ENCODE measurements at regions of chr9 and their contacts with region 1.

Region 1: GRCh38 chr9:13450723-13451122 is 171.2 kb upstream of the MPDZ start:
- DNase-seq: no peak
- ATAC-seq: no peak
- H3K4me3 ChIP-seq: no peak overlapping the region
- H3K4me3 Mint-ChIP-seq: no peak overlapping the region
- H3K27ac ChIP-seq: no peak overlapping the region
- H3K27ac Mint-ChIP-seq: no peak overlapping the region
- H3K4me1 ChIP-seq: no peaks in the 10 kb centered on the region
- H3K4me1 Mint-ChIP-seq: no peaks in the 10 kb centered on the region
- H3K27me3 ChIP-seq: no peaks in the 10 kb centered on the region
- H3K27me3 Mint-ChIP-seq: no peaks in the 10 kb centered on the region
- CTCF ChIP-seq: no peak

Region 2: GRCh38 chr9:13485068-13485596 is 34.4 kb after region 1 on chr9:
- CTCF ChIA-PET with region 1: no interaction called
- POLR2A ChIA-PET with region 1: no interaction called
- intact Hi-C with region 1: no loop called
- DNase-seq: no peak
- ATAC-seq: no peak
- H3K4me3 ChIP-seq: no peak overlapping the region
- H3K4me3 Mint-ChIP-seq: no peak overlapping the region
- H3K27ac ChIP-seq: no peak overlapping the region
- H3K27ac Mint-ChIP-seq: no peak overlapping the region
- H3K4me1 ChIP-seq: no peaks in the 10 kb centered on the region
- H3K4me1 Mint-ChIP-seq: no peaks in the 10 kb centered on the region
- H3K27me3 ChIP-seq: no peaks in the 10 kb centered on the region
- H3K27me3 Mint-ChIP-seq: no peaks in the 10 kb centered on the region
- CTCF ChIP-seq: no peak

Region 3: DNA sequence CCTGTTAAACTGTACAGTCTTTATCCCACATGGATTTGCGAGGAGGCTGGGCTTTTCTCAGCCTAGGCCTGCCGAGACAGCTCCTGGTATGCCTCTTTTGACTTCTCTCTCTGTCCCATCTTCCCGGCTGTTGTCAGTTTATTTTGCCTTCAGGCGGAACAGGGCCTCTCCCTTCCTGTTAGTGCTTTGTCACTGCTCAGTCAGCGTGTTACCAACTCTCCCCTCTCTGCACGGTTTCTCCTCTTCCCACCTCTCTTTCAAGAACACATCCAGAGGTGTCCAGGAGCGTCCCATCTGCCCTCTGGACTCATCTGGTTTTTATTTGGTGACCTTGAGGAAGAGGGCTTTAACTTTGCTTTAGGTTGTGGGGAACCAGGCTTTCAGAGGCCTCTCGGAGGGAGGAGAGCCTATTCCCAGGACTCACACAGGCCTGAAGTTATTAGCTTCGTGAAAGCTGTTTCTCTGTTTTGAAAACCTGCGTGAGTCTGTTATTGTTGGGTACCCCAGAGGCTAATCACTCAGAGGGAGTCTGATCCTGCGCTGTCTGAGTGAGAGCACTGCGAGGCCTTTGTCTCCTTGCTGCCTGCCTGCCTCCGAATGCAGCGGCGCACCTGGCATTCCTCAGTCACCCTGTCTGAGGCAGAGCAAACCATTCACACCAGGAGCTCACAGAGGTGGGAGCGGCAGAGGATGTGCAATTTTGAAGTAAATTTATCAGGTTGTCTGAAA is 63.2 kb after region 1 on chr9:
- CTCF ChIA-PET with region 1: no interaction called
- POLR2A ChIA-PET with region 1: no interaction called
- intact Hi-C with region 1: loop called (anchors 10 kb)
- DNase-seq: no peak
- ATAC-seq: no peak
- H3K4me3 ChIP-seq: no peak overlapping the region
- H3K4me3 Mint-ChIP-seq: no peak overlapping the region
- H3K27ac ChIP-seq: no peak overlapping the region
- H3K27ac Mint-ChIP-seq: no peak overlapping the region
- H3K4me1 ChIP-seq: no peaks in the 10 kb centered on the region
- H3K4me1 Mint-ChIP-seq: no peaks in the 10 kb centered on the region
- H3K27me3 ChIP-seq: no peaks in the 10 kb centered on the region
- H3K27me3 Mint-ChIP-seq: no peaks in the 10 kb centered on the region
- CTCF ChIP-seq: no peak

Measured in B cell (primary cell).